ENCODE measurements at regions of chr2 and their contacts with region 1.

Region 1: GRCh38 chr2:40062381-40062780 is 283.3 kb upstream of the THUMPD2 start:
- DNase-seq: no peak
- H3K4me3 ChIP-seq: no peak overlapping the region
- H3K27me3 ChIP-seq: no peaks in the 10 kb centered on the region
- CTCF ChIP-seq: no peak

Region 2: DNA sequence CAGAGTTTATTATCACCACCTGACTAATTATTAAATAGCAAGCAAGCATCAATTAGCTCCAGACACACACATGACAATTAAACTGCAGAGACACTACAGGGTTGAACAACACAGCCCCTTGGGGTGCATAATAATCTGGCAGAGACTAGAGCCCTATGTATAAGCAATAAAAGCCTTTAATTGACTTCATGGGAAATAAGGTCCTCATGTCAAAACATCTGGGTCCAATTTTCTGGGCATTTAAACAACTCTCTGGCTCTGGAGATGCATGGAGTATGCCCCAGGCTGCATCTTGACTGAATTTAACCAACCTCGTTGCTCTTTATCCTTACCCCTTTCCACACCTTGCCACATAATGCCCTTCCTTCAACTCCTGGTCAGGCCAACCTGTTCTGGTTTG is 12.6 kb before region 1 on chr2:
- CTCF ChIA-PET with region 1: interaction called, 11 read pairs
- POLR2A ChIA-PET with region 1: no interaction called
- DNase-seq: no peak
- H3K4me3 ChIP-seq: no peak overlapping the region
- H3K27me3 ChIP-seq: no peaks in the 10 kb centered on the region
- CTCF ChIP-seq: no peak

Region 3: GRCh38 chr2:40218679-40219078 is 156.3 kb after region 1 on chr2:
- CTCF ChIA-PET with region 1: no interaction called
- POLR2A ChIA-PET with region 1: no interaction called
- DNase-seq: no peak
- H3K4me3 ChIP-seq: no peak overlapping the region
- H3K27me3 ChIP-seq: no peaks in the 10 kb centered on the region
- CTCF ChIP-seq: no peak

Measured in BJ (cell line).